Panc1 (cell line): ENCODE measurements at regions of chr1 and their contacts with region 1.

Region 1: GRCh38 chr1:112445596-112445995 is 49.6 kb downstream of the CTTNBP2NL start:
- DNase-seq: no peak
- ATAC-seq: no peak
- H3K4me3 ChIP-seq: no peak overlapping the region
- H3K27ac ChIP-seq: no peak overlapping the region
- H3K4me1 ChIP-seq: no peaks in the 10 kb centered on the region
- H3K27me3 ChIP-seq: no peaks in the 10 kb centered on the region
- CTCF ChIP-seq: no peak

Region 2: DNA sequence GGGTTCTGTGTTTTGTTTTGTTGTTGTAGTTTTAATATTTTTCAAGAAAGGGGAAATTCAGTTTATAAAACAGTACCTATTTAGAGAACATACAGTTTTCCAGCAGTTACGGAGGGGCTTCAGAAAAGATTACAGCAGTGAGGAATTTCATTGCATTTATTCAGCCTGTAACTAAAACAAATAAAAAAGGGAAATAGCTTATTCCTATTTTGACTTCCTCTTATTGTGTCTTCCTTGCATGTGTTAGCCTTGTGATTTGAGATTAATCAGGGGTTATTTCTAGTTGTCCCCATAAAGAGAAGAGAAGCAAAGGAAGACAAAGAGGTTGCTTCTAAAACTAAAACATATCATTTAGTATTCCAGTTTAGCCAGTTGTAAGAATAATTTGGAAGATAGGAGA is 14.6 kb before region 1 on chr1:
- CTCF ChIA-PET with region 1: interaction called, 17 read pairs
- POLR2A ChIA-PET with region 1: interaction called, 3 read pairs
- in situ Hi-C with region 1: no loop called
- intact Hi-C with region 1: no loop called
- DNase-seq: no peak
- ATAC-seq: no peak
- H3K4me3 ChIP-seq: no peak overlapping the region
- H3K27ac ChIP-seq: no peak overlapping the region
- H3K4me1 ChIP-seq: no peaks in the 10 kb centered on the region
- H3K27me3 ChIP-seq: no peaks in the 10 kb centered on the region
- CTCF ChIP-seq: no peak